ENCODE measurements at regions of chr5 and their contacts with region 1.

Region 1: GRCh38 chr5:38556599-38557305 is at the start of gene LIFR:
- DNase-seq: peak; percentile 53 to 95
- H3K4me3 ChIP-seq: peak within 1 kb of the TSS; percentile 97
- H3K27ac ChIP-seq: peak within 1 kb of the TSS; percentile 58
- H3K4me1 ChIP-seq: peaks cover 10% of the 10 kb centered on the region; the same call in 1 of the 2 replicates
- H3K27me3 ChIP-seq: 0 out of 2 replicates have a peak, but pooled peaks cover 15% of the 10 kb centered on the region
- CTCF ChIP-seq: no peak
- total RNA-seq, gene LIFR: 22.0 and 28.6 TPM in 2 replicates

Region 2: DNA sequence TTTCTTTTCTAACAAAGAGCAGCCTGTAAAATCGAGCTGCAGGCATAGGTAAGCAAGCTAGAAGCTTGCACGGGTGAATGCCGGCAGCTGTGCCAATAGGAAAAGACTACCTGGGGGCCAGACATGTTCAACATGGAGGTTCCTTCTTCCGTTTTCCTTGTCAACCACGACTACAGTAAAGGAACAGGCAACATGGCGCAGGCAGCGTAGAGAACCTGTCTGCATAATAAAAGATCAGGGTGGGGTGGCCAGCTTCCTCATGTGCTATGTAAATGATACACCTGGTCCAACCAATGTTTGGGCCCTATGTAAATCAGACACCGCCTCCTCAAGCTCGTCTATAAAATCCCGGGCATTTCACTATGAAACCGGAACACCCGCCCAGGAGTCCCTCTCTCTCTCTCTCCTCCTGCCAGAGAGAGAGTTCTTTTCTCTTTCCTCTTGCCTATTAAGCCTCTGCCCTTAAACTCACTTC is 103.5 kb after region 1 on chr5:
- CTCF ChIA-PET with region 1: no interaction called
- POLR2A ChIA-PET with region 1: no interaction called
- intact Hi-C with region 1: loop called (anchors 2 kb)
- DNase-seq: peak; percentile 82 to 88
- H3K4me3 ChIP-seq: peak overlapping the region; percentile 57; the same call in 1 of the 2 replicates
- H3K27ac ChIP-seq: peak overlapping the region; percentile 40
- H3K4me1 ChIP-seq: no peaks in the 10 kb centered on the region
- H3K27me3 ChIP-seq: no peaks in the 10 kb centered on the region
- CTCF ChIP-seq: no peak

Region 3: DNA sequence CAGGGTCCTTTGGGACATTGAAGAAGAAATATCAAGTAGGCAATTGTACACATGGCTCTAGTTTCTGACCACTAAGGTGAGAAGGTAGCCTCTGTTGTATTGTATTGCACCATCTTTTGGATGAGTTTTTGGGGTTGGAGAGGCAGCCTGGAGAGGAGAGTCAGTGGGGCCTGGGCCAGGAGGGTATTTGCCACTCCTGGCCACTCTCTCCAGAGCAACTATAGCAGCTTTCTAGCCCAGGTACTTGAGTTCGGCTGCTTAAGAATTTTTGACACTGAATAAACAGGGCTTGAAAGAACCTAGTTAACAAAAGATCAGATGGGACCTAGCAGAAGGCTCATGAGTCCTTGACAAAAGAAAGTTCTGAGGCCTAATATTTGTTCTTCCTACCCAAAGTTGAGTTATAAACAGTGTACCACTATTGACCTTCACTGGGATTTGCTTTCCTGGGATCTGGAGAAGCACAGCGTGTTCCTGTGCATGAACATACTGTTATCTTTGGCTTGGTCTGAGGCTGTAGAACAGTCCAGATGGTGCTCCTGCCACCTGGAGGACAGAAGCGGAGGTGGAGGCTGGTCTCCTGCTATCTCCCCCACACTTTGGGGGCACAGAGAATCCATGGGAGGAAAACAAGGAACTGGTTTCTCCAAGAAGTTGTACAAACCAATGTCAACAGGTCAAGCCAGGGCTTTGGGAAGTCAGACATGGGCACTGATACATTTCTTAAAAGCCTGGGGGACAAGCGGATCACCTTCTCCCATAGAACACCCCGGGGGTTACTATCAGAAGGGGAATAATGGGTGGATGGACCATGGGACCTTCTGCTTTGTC is 110.1 kb after region 1 on chr5:
- CTCF ChIA-PET with region 1: interaction called, 4 read pairs
- POLR2A ChIA-PET with region 1: no interaction called
- intact Hi-C with region 1: loop called (anchors 1 kb)
- DNase-seq: peak in 1 of 2 experiments; percentile 52
- H3K4me3 ChIP-seq: no peak overlapping the region
- H3K27ac ChIP-seq: no peak overlapping the region
- H3K4me1 ChIP-seq: no peaks in the 10 kb centered on the region
- H3K27me3 ChIP-seq: no peaks in the 10 kb centered on the region
- CTCF ChIP-seq: peak; percentile 79

Region 4: DNA sequence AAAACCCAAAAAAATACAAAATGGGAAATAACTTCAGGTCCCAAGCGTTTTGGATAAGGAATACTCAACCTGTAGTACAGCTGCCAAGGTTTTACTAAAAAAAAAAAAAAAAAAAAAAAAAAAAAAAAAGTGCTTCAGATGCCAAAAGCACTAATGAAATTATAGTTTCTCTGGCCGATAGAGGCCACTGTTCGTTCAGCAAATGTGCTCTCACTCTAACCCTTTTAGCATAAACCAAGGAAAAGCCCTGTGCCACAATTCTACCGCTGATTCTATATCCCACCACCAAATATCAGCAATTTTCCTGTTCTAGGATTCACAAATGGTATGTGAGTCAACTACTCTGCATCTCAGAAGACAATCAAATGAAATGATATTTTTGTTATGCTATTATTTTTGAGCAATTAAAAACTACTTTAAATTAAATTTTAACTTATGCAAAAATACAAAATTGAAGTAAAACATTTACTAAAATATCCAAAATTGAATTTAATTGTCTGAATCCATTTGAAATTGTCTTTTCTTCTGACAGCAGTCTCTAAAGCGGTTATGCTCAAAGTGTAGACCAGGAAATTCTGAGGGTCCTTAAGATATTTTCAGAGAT is 437.7 kb after region 1 on chr5:
- CTCF ChIA-PET with region 1: no interaction called
- POLR2A ChIA-PET with region 1: no interaction called
- intact Hi-C with region 1: no loop called
- DNase-seq: peak; percentile 50 to 73
- H3K4me3 ChIP-seq: no peak overlapping the region
- H3K27ac ChIP-seq: no peak overlapping the region
- H3K4me1 ChIP-seq: no peaks in the 10 kb centered on the region
- H3K27me3 ChIP-seq: no peaks in the 10 kb centered on the region
- CTCF ChIP-seq: peak; percentile 80

Region 5: GRCh38 chr5:39355324-39355723 is 798.6 kb after region 1 on chr5:
- CTCF ChIA-PET with region 1: no interaction called
- POLR2A ChIA-PET with region 1: no interaction called
- intact Hi-C with region 1: no loop called
- DNase-seq: no peak
- H3K4me3 ChIP-seq: no peak overlapping the region
- H3K27ac ChIP-seq: no peak overlapping the region
- H3K4me1 ChIP-seq: 0 out of 2 replicates have a peak, but pooled peaks cover under 1% of the 10 kb centered on the region
- H3K27me3 ChIP-seq: no peaks in the 10 kb centered on the region
- CTCF ChIP-seq: no peak